Left ventricle myocardium inferior (tissue), 1 donor: ENCODE measurements at regions of chr18 and their contacts with region 1.

Region 1: GRCh38 chr18:23586249-23587196 is at the start of gene NPC1:
- DNase-seq: peak; percentile 95
- H3K4me3 ChIP-seq: peak within 1 kb of the TSS; percentile 81
- H3K27ac ChIP-seq: peak within 1 kb of the TSS; percentile 99
- H3K4me1 ChIP-seq: peaks cover 49% of the 10 kb centered on the region
- H3K27me3 ChIP-seq: peaks cover 27% of the 10 kb centered on the region
- CTCF ChIP-seq: peak; percentile 99
- total RNA-seq, gene NPC1: 10.3 TPM

Region 2: GRCh38 chr18:23433360-23433759 is 153.2 kb before region 1 on chr18:
- intact Hi-C with region 1: no loop called
- DNase-seq: no peak
- H3K4me3 ChIP-seq: no peak overlapping the region
- H3K27ac ChIP-seq: peak overlapping the region; percentile 58
- H3K4me1 ChIP-seq: peaks cover 26% of the 10 kb centered on the region
- H3K27me3 ChIP-seq: no peaks in the 10 kb centered on the region
- CTCF ChIP-seq: no peak

Region 3: GRCh38 chr18:23503038-23503962 is 83.2 kb before region 1 on chr18 and contains the start of gene RMC1:
- intact Hi-C with region 1: loop called (anchors 5 kb)
- DNase-seq: peak; percentile 98
- H3K4me3 ChIP-seq: peak within 1 kb of the TSS; percentile 99
- H3K27ac ChIP-seq: peak within 1 kb of the TSS; percentile 97
- H3K4me1 ChIP-seq: peaks cover 35% of the 10 kb centered on the region
- H3K27me3 ChIP-seq: no peaks in the 10 kb centered on the region
- CTCF ChIP-seq: peak; percentile 31
- total RNA-seq, gene RMC1: 14.7 TPM

Region 4: GRCh38 chr18:23515911-23516546 is 70.5 kb before region 1 on chr18:
- intact Hi-C with region 1: loop called (anchors 5 kb)
- DNase-seq: peak; percentile 65
- H3K4me3 ChIP-seq: no peak overlapping the region
- H3K27ac ChIP-seq: no peak overlapping the region
- H3K4me1 ChIP-seq: peaks cover 7% of the 10 kb centered on the region
- H3K27me3 ChIP-seq: no peaks in the 10 kb centered on the region
- CTCF ChIP-seq: peak; percentile 89

Region 5: DNA sequence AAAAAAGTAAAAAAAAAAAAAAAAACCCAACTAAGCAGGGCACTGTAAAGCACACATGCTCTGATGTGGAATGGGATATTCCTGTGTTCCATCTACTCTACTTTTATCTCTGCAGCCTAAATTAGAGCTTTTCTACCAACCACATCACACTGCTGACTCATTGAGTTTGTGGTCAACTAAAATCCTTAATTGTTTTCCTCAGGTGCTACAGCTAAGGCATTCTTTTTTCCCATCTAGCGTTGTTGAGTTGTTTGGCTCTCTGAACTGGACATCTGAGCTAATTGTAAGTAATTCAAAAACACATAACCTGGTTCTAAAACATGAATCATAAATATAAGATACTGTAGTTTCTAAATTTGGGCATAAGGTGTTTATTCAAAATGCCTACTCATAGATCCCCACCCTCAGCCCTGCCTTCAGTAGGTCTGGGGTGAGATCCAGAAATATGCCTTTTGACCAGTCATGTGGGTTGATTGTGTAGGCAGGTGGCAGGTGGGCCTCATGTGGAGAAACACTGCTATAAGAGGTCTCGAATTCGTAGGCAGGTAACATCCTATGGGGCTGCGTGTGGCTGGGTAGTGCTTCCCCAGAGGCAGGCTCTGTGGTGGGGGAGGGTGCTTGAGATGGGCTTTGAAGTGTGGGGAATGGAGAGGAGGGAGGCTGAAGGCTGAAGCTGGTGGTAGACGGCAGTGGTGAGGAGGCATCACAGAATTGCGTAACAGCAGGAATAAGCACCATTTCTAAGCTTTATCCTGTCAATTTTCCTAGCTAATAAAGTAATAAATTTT is 49.0 kb after region 1 on chr18:
- intact Hi-C with region 1: no loop called
- DNase-seq: no peak
- H3K4me3 ChIP-seq: no peak overlapping the region
- H3K27ac ChIP-seq: no peak overlapping the region
- H3K4me1 ChIP-seq: no peaks in the 10 kb centered on the region
- H3K27me3 ChIP-seq: no peaks in the 10 kb centered on the region
- CTCF ChIP-seq: no peak